ENCODE measurements at regions of chr12 and their contacts with region 1.

Region 1: GRCh38 chr12:70576346-70577282 is 60.6 kb downstream of the PTPRB start:
- DNase-seq: no peak

Region 2: DNA sequence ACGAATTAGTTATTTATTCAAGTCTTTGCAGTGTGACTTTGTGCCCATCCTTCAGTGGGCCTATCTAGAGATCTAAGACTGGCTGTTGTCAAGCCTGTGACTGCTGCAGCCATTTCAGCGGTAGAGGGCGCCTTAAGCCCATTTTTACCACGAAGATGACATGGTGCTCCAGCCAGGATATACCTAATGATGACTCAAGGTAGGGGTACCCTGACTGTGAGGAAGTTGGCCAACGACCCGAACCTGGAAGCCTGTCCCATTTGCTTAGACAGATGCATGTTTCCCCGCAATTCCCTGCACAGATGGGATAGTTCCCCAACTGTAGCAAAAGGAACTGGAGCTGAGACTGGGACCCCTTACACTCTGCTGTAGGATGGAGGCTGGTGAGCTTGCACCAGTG is 796.7 kb before region 1 on chr12:
- intact Hi-C with region 1: no loop called
- DNase-seq: no peak

Region 3: GRCh38 chr12:70242695-70243509 is 333.7 kb before region 1 on chr12 and contains the start of gene CNOT2:
- intact Hi-C with region 1: loop called (anchors 10 kb)
- DNase-seq: peak; percentile 93
- total RNA-seq, gene CNOT2: 44.0 TPM

Measured in cardiac septum (tissue), 1 donor.